ENCODE measurements at regions of chr1 and their contacts with region 1.

Region 1: DNA sequence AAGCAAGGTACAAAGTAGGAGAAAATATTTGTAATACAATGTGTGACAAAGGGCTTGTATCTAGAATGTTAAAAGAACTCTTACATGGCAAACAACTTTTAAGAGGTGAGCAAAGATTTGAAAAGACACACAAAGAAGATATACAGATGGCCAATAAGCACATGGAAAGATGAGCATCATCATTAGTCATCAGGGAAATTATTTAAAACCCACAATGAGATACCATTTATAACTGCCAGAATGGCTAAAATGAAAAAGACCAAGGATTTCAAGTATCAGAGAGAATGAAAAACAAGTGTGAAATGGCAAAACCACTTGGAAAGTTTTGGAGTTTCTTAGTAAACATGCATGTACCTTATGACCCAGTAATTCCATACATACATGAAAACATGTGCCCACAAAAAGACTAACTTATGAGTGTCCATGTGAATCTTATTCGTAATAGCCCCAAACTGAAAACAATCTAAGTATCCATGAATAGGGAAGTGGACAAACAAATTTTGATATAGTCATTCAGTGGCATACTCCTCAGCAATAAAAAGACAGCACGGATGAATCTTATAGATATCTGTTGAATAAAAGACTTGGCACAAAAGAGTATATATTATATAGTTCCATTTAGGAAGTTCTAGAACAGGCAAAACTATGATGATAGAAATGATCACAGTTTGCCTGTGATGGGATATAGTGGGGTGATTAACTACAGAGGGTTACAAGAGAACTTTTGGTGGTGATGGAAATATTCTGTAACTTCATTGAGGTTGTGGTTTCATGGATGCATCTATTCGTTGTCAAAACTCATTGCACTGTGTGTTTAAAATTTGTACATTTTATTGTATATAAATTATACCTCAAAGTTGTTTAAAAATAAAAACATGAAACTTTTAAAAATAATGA is 82.0 kb downstream of the DISP1 start:
- DNase-seq: no peak
- H3K4me3 Mint-ChIP-seq: no peak overlapping the region
- H3K27ac Mint-ChIP-seq: peak overlapping the region; percentile 28
- H3K4me1 Mint-ChIP-seq: peaks cover 15% of the 10 kb centered on the region
- H3K27me3 Mint-ChIP-seq: no peaks in the 10 kb centered on the region

Region 2: DNA sequence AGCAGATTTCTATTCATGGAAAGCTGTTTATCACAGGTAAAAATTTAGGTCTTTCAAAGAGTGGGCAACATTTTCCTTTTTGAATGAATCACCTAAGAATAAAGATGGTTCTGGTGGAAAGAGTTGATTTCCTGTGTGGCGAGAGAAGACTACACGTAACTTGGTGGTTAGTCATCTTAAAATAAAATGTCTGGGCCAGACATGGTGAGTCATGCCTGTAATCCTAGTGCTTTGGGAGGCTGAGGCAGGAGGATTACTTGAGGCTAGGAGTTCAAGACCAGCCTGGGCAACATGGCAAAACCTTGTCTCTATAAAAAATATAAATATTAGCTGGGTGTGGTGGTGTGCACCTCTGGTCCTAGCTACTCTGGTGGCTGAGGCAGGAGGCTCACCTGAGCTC is 16.3 kb before region 1 on chr1:
- CTCF ChIA-PET with region 1: no interaction called
- POLR2A ChIA-PET with region 1: no interaction called
- intact Hi-C with region 1: loop called (anchors 1 kb)
- DNase-seq: peak; percentile 38
- H3K4me3 Mint-ChIP-seq: no peak overlapping the region
- H3K27ac Mint-ChIP-seq: no peak overlapping the region
- H3K4me1 Mint-ChIP-seq: peaks cover 11% of the 10 kb centered on the region
- H3K27me3 Mint-ChIP-seq: no peaks in the 10 kb centered on the region

Region 3: DNA sequence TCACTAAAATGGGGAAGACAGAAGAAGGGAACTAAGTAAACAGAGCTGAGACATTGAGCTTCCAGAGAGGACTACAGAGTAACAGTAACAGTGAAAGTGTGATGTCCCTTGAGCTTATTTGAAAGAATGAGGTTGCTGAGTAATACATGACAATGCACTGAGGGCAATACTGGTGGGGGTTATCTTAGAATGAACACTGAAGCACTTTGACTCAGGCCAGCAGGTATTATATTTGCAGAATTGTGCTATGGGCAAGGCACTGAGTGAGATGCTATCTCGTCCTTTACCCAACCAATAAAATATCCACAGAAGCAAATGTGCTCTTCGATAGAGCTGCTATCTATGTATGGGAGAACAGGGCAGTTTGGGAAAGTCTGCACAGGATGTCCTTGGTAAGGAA is 51.2 kb after region 1 on chr1:
- CTCF ChIA-PET with region 1: no interaction called
- POLR2A ChIA-PET with region 1: no interaction called
- intact Hi-C with region 1: no loop called
- DNase-seq: no peak
- H3K4me3 Mint-ChIP-seq: no peak overlapping the region
- H3K27ac Mint-ChIP-seq: no peak overlapping the region
- H3K4me1 Mint-ChIP-seq: no peaks in the 10 kb centered on the region
- H3K27me3 Mint-ChIP-seq: no peaks in the 10 kb centered on the region

Region 4: DNA sequence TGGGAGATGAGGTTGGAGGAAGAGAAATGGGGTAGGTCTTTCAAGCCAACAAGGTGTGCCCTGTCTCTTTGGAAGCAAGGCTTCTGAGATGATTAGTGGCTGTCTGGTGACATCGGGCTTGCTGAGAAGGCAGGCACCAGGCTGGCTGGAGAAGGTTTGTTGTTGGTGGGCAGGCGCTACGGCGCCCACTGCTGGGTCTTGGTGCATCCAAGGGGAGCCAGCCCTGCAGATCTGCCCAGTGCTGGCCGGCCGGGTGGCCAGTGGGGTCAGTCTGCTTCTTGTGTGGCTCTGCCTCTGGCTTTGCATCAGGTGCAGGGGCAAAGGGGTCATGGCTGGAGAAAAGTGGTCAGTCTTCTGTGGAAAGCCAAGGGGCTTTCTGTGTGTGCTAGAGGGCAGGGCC is 120.0 kb after region 1 on chr1:
- CTCF ChIA-PET with region 1: no interaction called
- POLR2A ChIA-PET with region 1: no interaction called
- intact Hi-C with region 1: no loop called
- DNase-seq: no peak
- H3K4me3 Mint-ChIP-seq: no peak overlapping the region
- H3K27ac Mint-ChIP-seq: no peak overlapping the region
- H3K4me1 Mint-ChIP-seq: no peaks in the 10 kb centered on the region
- H3K27me3 Mint-ChIP-seq: peaks cover 5% of the 10 kb centered on the region

Region 5: DNA sequence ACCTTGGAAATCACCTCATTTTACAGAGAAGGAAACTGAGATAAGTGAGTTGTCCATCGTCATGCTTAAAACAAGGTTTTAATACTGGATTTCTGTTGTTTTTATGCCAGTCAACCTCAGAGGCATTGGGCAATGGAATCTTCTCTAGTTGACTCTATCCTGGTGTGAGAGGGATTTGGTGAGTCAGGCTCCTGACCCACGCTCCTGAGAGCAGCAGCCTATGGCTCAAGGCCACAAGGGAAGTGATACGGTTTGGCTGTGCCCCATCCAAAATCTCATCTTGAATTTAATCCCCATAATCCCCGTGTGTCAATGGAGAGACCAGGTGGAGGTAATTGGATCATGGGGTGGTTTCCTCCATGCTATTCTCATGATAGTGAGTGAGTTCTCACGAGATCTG is 156.1 kb after region 1 on chr1:
- CTCF ChIA-PET with region 1: no interaction called
- POLR2A ChIA-PET with region 1: no interaction called
- intact Hi-C with region 1: no loop called
- DNase-seq: no peak
- H3K4me3 Mint-ChIP-seq: no peak overlapping the region
- H3K27ac Mint-ChIP-seq: no peak overlapping the region
- H3K4me1 Mint-ChIP-seq: no peaks in the 10 kb centered on the region
- H3K27me3 Mint-ChIP-seq: peaks cover 6% of the 10 kb centered on the region

Measured in activated CD4-positive, alpha-beta memory T cell treated with anti-CD3 and anti-CD28 coated beads for 36 hours (primary cell).